OCI-LY7 (cell line): ENCODE measurements at regions of chr3 and their contacts with region 1.

Region 1: DNA sequence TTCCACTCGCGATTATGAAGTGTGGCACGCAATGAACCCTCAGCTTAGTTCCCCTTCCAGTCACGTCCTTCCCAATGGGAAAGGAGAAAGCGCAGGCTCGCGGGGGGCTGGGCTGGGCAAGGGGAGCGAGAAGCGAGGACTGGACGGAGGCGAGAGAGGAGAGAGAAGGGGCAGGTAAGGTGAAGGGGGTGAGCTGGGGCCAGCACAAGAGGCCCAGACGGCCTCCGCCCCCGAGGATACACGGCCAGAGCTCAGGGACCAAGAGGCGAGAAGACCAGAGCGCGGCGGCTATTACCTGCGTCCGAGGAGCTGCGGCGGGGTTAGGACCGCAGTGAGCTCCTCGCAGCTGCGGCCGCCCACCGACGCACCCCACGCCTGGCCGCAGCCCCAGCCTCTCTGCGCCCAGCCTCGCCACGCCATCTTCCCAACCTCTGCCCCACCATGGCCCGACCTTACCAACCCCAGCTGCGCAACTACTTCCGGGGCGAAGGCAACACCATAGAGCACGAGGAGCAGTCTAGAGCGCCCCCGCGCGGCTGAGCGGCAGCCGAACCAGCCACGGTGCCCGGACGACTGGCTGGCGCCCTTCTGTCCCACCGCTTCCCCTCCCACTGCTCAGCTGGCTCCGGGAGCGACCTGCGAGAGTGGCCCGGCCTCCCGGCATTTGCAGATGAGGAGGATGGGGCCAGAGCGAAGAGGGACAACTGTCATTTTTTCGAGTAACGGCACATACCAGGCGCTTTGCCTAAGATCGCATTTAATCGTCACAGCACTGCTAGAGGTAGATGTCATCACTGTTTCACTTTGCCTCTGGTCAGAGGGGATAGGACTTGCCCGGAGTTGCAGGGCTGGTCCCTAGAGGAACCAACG is at the start of gene PARL:
- DNase-seq: peak; percentile 95
- H3K4me3 ChIP-seq: peak within 1 kb of the TSS; percentile 76
- H3K27ac ChIP-seq: peak within 1 kb of the TSS; percentile 47
- H3K4me1 ChIP-seq: peaks cover 19% of the 10 kb centered on the region
- CTCF ChIP-seq: peak; percentile 86
- total RNA-seq, gene PARL: 43.5 and 46.1 TPM in 2 replicates

Region 2: GRCh38 chr3:183825456-183826161 is 59.1 kb before region 1 on chr3 and contains the start of gene MAP6D1:
- CTCF ChIA-PET with region 1: interaction called, 4 read pairs
- POLR2A ChIA-PET with region 1: interaction called, 3 read pairs
- intact Hi-C with region 1: loop called (anchors 1 kb)
- DNase-seq: peak; percentile 66
- H3K4me3 ChIP-seq: peak within 1 kb of the TSS; percentile 66
- H3K27ac ChIP-seq: no peak within 1 kb of the TSS
- H3K4me1 ChIP-seq: peaks cover 14% of the 10 kb centered on the region
- CTCF ChIP-seq: peak; percentile 57
- total RNA-seq, gene MAP6D1: 0.88 and 1.5 TPM in 2 replicates

Region 3: DNA sequence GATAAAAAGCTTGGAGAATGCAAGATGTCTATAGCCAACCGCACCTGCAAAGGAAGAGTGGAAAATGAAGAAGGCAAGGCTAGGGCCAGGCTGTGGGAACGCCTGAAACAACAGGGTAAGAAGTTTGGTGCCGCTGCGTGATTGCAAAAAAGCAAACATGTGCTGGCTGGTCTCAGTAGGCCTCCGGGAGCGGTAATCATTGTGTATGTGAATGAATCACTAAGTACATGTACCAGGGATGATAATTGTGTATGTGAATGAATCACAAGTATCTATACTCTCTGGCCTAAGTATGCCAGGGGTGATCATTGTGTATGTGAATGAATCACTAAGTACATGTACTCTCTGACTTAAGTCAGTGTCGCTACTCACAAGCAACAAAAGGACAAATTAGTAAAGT is 40.3 kb after region 1 on chr3:
- CTCF ChIA-PET with region 1: no interaction called
- POLR2A ChIA-PET with region 1: no interaction called
- intact Hi-C with region 1: no loop called
- DNase-seq: no peak
- H3K4me3 ChIP-seq: no peak overlapping the region
- H3K27ac ChIP-seq: no peak overlapping the region
- H3K4me1 ChIP-seq: no peaks in the 10 kb centered on the region
- CTCF ChIP-seq: no peak

Region 4: DNA sequence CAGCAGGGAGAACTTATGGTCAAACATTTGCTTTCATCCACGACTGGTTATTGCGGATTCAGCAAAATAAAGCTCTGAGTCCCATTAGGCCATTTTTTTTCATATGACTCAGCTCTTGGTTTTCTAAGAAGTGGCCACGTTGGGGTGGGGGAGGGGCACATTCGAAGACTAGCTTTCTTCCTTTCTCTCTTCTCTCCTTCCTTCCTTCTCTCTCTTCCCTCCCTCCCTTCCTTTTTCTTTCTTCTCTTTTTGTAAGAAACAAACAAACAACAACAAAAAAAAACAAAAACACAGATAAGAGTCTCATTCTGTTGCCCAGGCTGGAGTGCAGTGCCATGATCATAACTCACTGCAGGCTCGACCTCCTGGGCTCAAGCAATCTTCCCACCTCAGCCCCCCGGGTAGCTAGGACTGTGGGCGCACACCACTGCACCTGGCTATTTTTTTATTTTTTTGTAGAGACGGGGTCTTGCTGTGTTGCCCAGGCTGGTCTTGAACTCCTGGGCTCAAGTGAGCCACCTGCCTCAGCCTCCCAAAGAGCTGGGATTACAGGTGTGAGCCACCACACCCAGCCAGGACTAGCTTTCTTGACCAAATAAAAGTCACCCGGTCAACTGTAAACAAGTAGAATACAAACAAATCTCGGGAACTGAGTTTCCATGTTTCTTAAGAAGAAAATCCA is 91.5 kb after region 1 on chr3:
- CTCF ChIA-PET with region 1: no interaction called
- POLR2A ChIA-PET with region 1: no interaction called
- intact Hi-C with region 1: no loop called
- DNase-seq: no peak
- H3K4me3 ChIP-seq: no peak overlapping the region
- H3K27ac ChIP-seq: no peak overlapping the region
- H3K4me1 ChIP-seq: peaks cover 12% of the 10 kb centered on the region
- CTCF ChIP-seq: no peak

Region 5: GRCh38 chr3:184822654-184823053 is 938.0 kb after region 1 on chr3:
- CTCF ChIA-PET with region 1: no interaction called
- POLR2A ChIA-PET with region 1: no interaction called
- intact Hi-C with region 1: no loop called
- DNase-seq: no peak
- H3K4me3 ChIP-seq: no peak overlapping the region
- H3K27ac ChIP-seq: no peak overlapping the region
- H3K4me1 ChIP-seq: no peaks in the 10 kb centered on the region
- CTCF ChIP-seq: no peak